PC-9 (cell line): ENCODE measurements at regions of chr11 and their contacts with region 1.

Region 1: DNA sequence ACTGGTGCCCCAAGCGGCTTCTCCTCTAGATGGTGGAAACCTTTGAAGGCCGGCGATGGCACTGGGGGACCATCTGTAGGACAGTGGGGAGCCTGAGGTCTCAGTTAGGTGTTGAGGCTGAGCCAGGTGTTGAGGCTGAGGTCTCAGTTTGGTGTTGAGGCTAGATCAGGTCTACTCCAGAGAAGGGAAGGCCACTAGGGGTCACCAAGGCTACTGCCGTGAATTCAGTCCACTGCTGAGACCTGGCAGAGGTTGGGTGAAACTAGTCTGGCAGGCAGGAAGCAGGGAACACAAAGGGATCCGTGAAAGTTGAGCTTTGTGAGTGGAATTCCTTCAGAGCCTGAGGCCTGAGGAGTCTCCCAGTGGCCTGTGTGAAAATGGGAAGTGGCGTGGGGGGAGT is 123.8 kb upstream of the FGF3 start:
- DNase-seq: peak; percentile 38 to 49
- H3K4me3 ChIP-seq: no peak overlapping the region
- H3K27ac ChIP-seq: no peak overlapping the region
- H3K4me1 ChIP-seq: peaks cover 14% of the 10 kb centered on the region
- H3K27me3 ChIP-seq: no peaks in the 10 kb centered on the region
- CTCF ChIP-seq: no peak; the same call in 1 of the 2 replicates

Region 2: GRCh38 chr11:70128435-70128906 is 185.4 kb after region 1 on chr11:
- CTCF ChIA-PET with region 1: interaction called, 6 read pairs
- POLR2A ChIA-PET with region 1: no interaction called
- intact Hi-C with region 1: loop called (anchors 1 kb)
- DNase-seq: peak; percentile 51 to 78
- H3K4me3 ChIP-seq: no peak overlapping the region
- H3K27ac ChIP-seq: peak overlapping the region; percentile 18; the same call in 1 of the 2 replicates
- H3K4me1 ChIP-seq: peaks cover 22% of the 10 kb centered on the region
- H3K27me3 ChIP-seq: no peaks in the 10 kb centered on the region
- CTCF ChIP-seq: 0 out of 2 replicates have a peak, but pooled peaks have one; percentile 26